ENCODE measurements at regions of chr7 and their contacts with region 1.

Region 1: DNA sequence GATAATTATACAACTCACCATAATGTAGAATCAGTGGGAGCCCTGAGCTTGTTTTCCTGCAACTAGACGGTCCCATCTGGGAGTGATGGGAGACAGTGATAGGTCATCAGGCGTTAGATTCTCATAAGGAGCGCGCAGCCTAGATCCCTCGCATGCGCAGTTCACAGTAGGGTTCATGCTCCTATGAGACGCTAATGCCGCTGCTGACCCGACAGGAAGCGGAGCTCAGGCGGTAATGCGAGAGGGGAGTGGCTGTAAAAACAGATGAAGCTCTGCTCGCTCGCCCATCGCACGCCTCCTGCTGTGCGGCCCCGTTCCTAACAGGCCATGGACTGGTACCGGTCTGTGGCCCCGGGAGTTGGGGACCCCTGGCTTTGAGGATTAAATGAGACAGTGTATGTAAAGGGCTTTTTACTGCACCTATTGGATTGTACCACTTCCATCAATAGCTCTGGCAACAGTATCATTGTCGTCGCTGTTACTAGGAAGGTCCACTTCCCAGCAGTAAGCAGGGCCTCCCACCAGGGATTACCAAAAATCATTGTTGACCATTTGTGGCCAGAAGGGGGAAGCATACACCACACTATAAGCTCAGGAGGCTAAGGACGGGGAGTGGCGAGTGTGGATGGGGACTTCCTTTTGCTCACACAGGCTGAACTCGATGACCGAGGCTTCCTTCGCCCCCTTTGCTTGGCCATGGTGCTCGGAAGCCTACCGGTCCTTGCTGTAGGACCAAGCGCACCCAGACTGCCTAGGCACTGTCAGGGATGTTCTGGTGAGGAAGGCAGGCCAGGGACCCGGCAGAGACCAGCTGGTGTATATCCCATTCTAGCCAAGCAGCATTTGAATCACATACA is 26.4 kb downstream of the AKR1B1 start:
- DNase-seq: peak; percentile 74
- ATAC-seq: peak; percentile 96
- H3K4me3 Mint-ChIP-seq: peak overlapping the region; percentile 81
- H3K27ac Mint-ChIP-seq: peak overlapping the region; percentile 74
- H3K4me1 Mint-ChIP-seq: no peaks in the 10 kb centered on the region
- H3K27me3 Mint-ChIP-seq: peaks cover 6% of the 10 kb centered on the region; the same call in 1 of the 2 replicates
- CTCF ChIP-seq: peak; percentile 70

Region 2: GRCh38 chr7:134420424-134421125 is 11.9 kb before region 1 on chr7:
- CTCF ChIA-PET with region 1: interaction called, 21 read pairs
- POLR2A ChIA-PET with region 1: interaction called, 3 read pairs
- DNase-seq: peak; percentile 58
- ATAC-seq: peak; percentile 95
- H3K4me3 Mint-ChIP-seq: no peak overlapping the region
- H3K27ac Mint-ChIP-seq: no peak overlapping the region
- H3K4me1 Mint-ChIP-seq: peaks cover 10% of the 10 kb centered on the region
- H3K27me3 Mint-ChIP-seq: no peaks in the 10 kb centered on the region
- CTCF ChIP-seq: 0 out of 2 replicates have a peak, but pooled peaks have one; percentile 17

Region 3: GRCh38 chr7:134480736-134481135 is 48.2 kb after region 1 on chr7:
- CTCF ChIA-PET with region 1: interaction called, 29 read pairs
- POLR2A ChIA-PET with region 1: no interaction called
- DNase-seq: no peak
- ATAC-seq: peak; percentile 76
- H3K4me3 Mint-ChIP-seq: no peak overlapping the region
- H3K27ac Mint-ChIP-seq: no peak overlapping the region
- H3K4me1 Mint-ChIP-seq: peaks cover 14% of the 10 kb centered on the region
- H3K27me3 Mint-ChIP-seq: no peaks in the 10 kb centered on the region
- CTCF ChIP-seq: no peak

Region 4: GRCh38 chr7:134547397-134548054 is 115.0 kb after region 1 on chr7:
- CTCF ChIA-PET with region 1: interaction called, 57 read pairs
- POLR2A ChIA-PET with region 1: no interaction called
- DNase-seq: peak; percentile 86
- ATAC-seq: peak; percentile 93
- H3K4me3 Mint-ChIP-seq: peak overlapping the region; percentile 73
- H3K27ac Mint-ChIP-seq: peak overlapping the region; percentile 94
- H3K4me1 Mint-ChIP-seq: peaks cover 40% of the 10 kb centered on the region
- H3K27me3 Mint-ChIP-seq: no peaks in the 10 kb centered on the region; the same call in 1 of the 2 replicates
- CTCF ChIP-seq: peak; percentile 74

Region 5: DNA sequence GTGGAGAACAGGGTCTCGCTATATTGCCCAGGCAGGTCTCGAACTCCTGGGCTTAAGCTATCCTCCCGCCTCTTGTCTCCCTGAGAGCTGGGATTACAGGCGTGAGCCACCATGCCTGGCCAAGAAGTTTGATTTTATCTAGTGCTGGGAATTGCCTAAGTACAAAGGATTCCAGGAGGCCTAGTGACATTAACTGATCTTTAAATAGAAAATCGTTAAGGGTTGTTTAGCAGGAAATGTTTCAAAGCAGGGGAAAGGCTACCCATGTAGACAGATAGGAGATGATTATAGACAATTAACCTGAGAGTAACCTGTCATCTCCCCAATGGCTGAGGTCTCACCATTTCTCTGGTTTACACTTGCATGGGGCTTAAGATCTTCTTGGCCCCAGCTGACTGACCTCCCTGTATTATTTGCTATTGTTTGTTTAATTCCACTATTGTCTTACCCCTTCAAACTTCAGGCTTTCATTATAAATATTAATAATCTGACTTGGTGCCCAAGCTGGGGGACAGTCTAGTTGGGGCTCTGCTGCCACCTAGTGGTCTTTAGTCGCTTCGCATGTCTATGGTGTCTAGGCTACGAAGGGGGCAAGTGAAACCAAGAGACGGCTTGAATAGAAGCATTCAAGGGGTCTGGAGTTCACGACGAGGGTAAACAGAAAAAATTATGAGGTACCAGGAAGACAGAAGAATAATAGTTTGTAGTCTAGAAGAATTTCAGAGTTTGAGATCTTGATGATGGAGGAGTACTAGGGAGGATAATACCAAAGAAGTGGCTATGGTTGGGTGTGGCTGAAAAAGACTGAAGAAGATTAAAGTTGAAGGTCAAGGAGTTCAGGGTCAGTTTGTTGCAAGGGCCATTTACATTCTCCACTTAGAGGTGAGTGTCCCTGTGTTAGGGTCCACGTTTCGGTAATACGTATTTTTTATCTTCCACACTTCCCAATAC is 173.7 kb after region 1 on chr7:
- CTCF ChIA-PET with region 1: interaction called, 19 read pairs
- POLR2A ChIA-PET with region 1: no interaction called
- DNase-seq: peak; percentile 52
- ATAC-seq: peak; percentile 98
- H3K4me3 Mint-ChIP-seq: peak overlapping the region; percentile 47
- H3K27ac Mint-ChIP-seq: no peak overlapping the region
- H3K4me1 Mint-ChIP-seq: no peaks in the 10 kb centered on the region; the same call in 1 of the 2 replicates
- H3K27me3 Mint-ChIP-seq: peaks cover 4% of the 10 kb centered on the region
- CTCF ChIP-seq: peak; percentile 76

Region 6: GRCh38 chr7:134866617-134867016 is 434.1 kb after region 1 on chr7:
- CTCF ChIA-PET with region 1: no interaction called
- POLR2A ChIA-PET with region 1: no interaction called
- DNase-seq: no peak
- ATAC-seq: no peak
- H3K4me3 Mint-ChIP-seq: no peak overlapping the region
- H3K27ac Mint-ChIP-seq: peak overlapping the region; percentile 72
- H3K4me1 Mint-ChIP-seq: peaks cover 38% of the 10 kb centered on the region
- H3K27me3 Mint-ChIP-seq: no peaks in the 10 kb centered on the region
- CTCF ChIP-seq: no peak

Region 7: DNA sequence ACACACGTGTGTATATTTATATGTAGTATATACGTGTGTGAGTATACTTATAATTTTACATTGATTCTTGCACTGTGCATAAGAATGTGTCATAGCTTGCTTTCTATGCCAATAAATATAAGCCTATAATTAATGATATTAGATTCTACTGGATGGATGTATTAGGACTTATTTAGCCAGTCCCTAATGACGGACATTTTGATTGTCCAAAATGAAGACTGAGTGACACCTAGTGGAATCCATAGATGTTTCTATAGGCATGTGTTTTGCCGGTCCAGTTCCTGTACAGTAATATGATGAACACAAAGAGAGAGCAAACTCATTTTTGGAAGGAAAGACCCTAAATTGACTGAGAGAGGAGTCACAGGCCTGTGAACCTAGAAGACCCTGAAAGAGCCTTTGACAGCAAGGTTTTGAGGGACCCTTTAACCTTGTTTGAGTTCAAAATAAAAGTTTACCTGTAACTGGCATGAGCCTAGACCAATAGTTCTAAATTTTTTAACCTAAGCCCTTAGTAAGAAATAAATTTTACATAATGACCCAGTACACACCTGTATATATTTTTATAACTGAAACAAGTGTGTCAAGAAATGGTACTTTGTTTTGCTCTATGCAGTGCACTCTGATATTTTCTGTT is 511.4 kb after region 1 on chr7:
- CTCF ChIA-PET with region 1: no interaction called
- POLR2A ChIA-PET with region 1: no interaction called
- DNase-seq: no peak
- ATAC-seq: no peak
- H3K4me3 Mint-ChIP-seq: no peak overlapping the region
- H3K27ac Mint-ChIP-seq: no peak overlapping the region
- H3K4me1 Mint-ChIP-seq: peaks cover 18% of the 10 kb centered on the region
- H3K27me3 Mint-ChIP-seq: no peaks in the 10 kb centered on the region
- CTCF ChIP-seq: no peak